Common myeloid progenitor, CD34-positive (primary cell): ENCODE measurements at regions of chr17 and their contacts with region 1.

Region 1: GRCh38 chr17:42027961-42028790 is 8.3 kb downstream of the NKIRAS2 start:
- DNase-seq: no peak
- H3K4me3 ChIP-seq: no peak overlapping the region
- H3K27ac ChIP-seq: no peak overlapping the region
- H3K4me1 ChIP-seq: peaks cover 9 to 51% (median 44%) of the 10 kb centered on the region in 4 experiments
- H3K27me3 ChIP-seq: no peaks in the 10 kb centered on the region

Region 2: GRCh38 chr17:41567317-41567716 is 460.9 kb before region 1 on chr17:
- CTCF ChIA-PET with region 1: no interaction called
- POLR2A ChIA-PET with region 1: no interaction called
- DNase-seq: no peak
- H3K4me3 ChIP-seq: no peak overlapping the region
- H3K27ac ChIP-seq: no peak overlapping the region
- H3K4me1 ChIP-seq: no peaks in the 10 kb centered on the region
- H3K27me3 ChIP-seq: peaks cover 0 to 25% (median 9%) of the 10 kb centered on the region in 5 experiments

Region 3: DNA sequence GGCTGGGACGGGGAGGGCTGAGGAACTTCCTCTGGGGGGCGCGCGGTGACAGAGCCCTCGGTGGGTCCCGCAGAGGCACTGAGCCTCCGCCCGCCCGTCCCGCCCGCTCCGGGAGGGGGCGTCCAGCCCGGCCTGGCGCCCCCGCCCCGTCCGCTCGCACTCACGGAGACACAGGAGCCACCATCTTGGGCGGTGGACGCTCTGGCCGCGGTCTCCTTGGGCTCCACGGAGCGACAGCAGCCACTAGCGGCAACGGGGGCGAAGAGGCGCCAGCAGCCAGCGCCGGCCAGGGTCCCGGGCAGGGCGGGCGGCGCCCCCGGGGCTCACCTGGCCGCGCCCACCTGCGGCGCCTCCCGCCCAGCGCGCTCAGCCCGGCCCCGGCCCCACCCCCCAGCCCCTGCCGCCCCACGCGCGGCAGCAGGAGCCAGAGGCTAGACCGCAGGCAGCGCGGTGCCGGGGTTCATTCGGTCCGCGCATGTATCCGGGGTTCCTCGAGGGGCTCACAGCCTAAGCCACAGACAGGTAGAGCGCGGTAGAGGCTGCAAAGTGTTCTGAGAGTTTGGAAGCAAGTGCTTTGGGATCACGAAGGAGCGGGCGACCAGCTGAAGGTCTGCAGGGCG is 22.3 kb after region 1 on chr17 and contains the start of gene C17orf113:
- CTCF ChIA-PET with region 1: interaction called, 12 read pairs
- POLR2A ChIA-PET with region 1: no interaction called
- DNase-seq: peak; percentile 59 to 73 (median 62)
- H3K4me3 ChIP-seq: peak within 1 kb of the TSS; percentile 49 to 89 (median 70)
- H3K27ac ChIP-seq: peak within 1 kb of the TSS in 1 of 2 experiments; percentile 2
- H3K4me1 ChIP-seq: peaks cover 0 to 19% (median 7%) of the 10 kb centered on the region in 4 experiments
- H3K27me3 ChIP-seq: peaks cover 0 to 3% (median 0%) of the 10 kb centered on the region in 5 experiments

Region 4: GRCh38 chr17:42101513-42102319 is 73.5 kb after region 1 on chr17:
- CTCF ChIA-PET with region 1: interaction called, 381 read pairs
- POLR2A ChIA-PET with region 1: no interaction called
- DNase-seq: peak; percentile 58 to 66 (median 58)
- H3K4me3 ChIP-seq: no peak overlapping the region
- H3K27ac ChIP-seq: no peak overlapping the region
- H3K4me1 ChIP-seq: peaks cover 0 to 18% (median 10%) of the 10 kb centered on the region in 4 experiments
- H3K27me3 ChIP-seq: peaks cover 0 to 14% (median 9%) of the 10 kb centered on the region in 5 experiments